KBM-7 (cell line): ENCODE measurements at regions of chr22 and their contacts with region 1.

Region 1: GRCh38 chr22:19995626-19996335 is 20.8 kb downstream of the ARVCF start:
- DNase-seq: no peak

Region 2: GRCh38 chr22:20052309-20053259 is 56.8 kb after region 1 on chr22:
- in situ Hi-C with region 1: loop called (anchors 10 kb)
- DNase-seq: no peak

Region 3: GRCh38 chr22:20186183-20186870 is 190.5 kb after region 1 on chr22:
- in situ Hi-C with region 1: no loop called
- DNase-seq: peak; percentile 51

Region 4: GRCh38 chr22:20268279-20269012 is 272.7 kb after region 1 on chr22 and contains the start of gene RTN4R:
- in situ Hi-C with region 1: no loop called
- DNase-seq: peak; percentile 39